ENCODE measurements at regions of chr17 and their contacts with region 1.

Region 1: DNA sequence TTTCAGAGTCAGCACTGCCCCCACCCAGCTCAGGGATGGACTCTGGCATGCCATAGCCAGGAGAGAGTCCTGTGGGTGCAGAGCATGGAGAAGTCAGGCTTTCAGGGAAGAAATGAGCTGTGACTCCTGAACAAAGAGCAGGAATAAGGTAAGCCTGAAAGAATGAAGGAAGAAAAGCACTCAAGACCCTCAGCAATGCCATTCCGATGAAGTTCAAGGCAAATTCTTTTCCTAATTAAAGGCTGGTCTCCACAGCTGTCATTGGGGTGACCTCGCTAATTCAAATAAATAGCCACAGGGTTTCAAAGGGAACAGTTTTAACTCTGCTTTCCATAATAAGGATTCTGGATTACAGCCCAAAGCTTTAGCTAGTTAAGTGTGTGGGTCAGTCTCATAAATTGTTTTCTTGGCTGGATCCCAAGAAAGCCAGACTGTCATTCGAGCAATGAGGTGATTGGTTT is 31.7 kb downstream of the TOM1L2 start:
- DNase-seq: no peak
- H3K4me3 ChIP-seq: no peak overlapping the region
- H3K27ac ChIP-seq: peak overlapping the region; percentile 25
- H3K27me3 ChIP-seq: no peaks in the 10 kb centered on the region
- CTCF ChIP-seq: no peak

Region 2: DNA sequence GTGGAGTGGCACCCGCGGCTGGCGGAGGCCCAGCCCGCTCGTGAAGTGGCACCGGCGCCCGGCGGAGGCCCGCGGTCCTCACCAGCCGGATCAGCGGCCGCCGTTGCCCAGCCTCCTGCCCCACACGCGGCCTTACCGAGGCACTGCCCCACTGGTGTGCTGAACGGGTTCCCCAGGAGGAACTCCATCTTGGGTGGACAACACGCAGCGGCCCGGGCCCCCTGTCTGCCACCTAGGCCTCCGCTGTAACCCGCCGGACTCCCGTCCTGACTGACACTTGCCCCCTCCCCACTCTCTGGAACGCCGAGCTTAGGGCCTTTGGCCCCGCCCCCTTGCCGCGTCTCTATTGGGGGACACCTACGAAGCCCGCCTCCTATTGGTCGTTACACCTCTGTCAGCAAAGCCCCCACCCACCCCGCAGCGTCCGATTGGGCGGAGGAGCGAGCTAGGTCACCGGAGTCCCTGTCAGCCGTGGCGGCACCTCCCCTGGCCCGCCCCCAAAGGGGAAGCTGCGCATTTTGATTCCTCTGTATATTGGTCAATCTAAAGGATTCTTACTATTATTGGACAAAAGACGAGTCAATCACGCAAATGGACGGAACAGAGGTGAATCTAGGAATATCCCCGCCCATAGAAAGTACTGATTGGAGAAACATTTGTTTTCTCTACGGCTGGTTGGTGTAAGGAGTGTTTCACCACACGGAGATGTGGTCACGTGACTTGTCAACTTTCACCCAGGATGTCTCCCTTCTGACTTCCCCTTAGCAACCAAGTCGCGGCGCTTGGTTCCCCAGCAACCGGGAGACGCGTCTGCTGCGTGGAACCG is 31.9 kb after region 1 on chr17 and contains the starts of genes DRC3 and TOM1L2:
- CTCF ChIA-PET with region 1: interaction called, 10 read pairs
- POLR2A ChIA-PET with region 1: interaction called, 7 read pairs
- DNase-seq: peak; percentile 100
- H3K4me3 ChIP-seq: peak within 1 kb of the TSS; percentile 77
- H3K27ac ChIP-seq: no peak within 1 kb of the TSS
- H3K27me3 ChIP-seq: no peaks in the 10 kb centered on the region
- CTCF ChIP-seq: peak; percentile 8; the same call in 1 of the 2 replicates
- polyA plus RNA-seq, gene DRC3: 0.52 and 0.77 TPM in 2 replicates
- polyA plus RNA-seq, gene TOM1L2: 24.1 and 25.5 TPM in 2 replicates